H1 (cell line): ENCODE measurements at regions of chr1 and their contacts with region 1.

Region 1: DNA sequence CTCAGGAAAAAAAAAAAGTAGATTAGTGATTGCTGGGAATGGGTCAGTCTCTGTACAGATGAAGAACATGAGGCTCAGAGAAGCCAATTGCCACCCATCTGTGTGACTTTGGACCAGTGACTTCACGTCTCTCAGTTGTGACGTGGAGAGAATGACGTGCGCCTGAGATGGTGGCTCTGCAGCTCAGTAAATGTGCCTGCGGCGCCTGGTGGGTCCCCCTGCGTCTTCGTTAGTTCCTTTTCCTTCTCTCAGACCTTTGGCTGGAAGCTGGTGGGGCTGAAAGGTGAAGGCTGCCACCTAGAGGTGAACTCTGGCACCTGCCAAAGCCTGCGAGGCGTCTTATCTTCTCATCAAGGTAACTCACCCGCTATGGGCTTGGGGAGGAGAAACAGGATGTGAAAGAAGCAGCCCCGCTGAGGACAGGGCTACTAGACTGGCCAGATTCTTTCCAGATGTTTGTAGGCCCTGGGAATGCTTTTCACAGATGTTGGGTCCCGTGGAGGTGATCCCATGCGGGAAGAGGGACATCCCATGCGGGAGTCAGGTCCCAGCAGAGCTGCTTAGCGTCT is 8.7 kb upstream of the E2F2 start:
- DNase-seq: peak; percentile 95 to 98
- H3K4me3 ChIP-seq: no peak overlapping the region
- H3K27ac ChIP-seq: no peak overlapping the region
- H3K4me1 ChIP-seq: peaks cover 0 to under 1% (median 0%) of the 10 kb centered on the region in 4 experiments; a peak in 2 of 7 replicates
- H3K27me3 ChIP-seq: no peaks in the 10 kb centered on the region
- CTCF ChIP-seq: peak; percentile 82 to 97 (median 94)
- EP300 ChIP-seq: peak in 1 of 2 experiments; percentile 53; a peak in 1 of 3 replicates
- POLR2A ChIP-seq: no peak
- RAD21 ChIP-seq: peak; percentile 97 to 98

Region 2: DNA sequence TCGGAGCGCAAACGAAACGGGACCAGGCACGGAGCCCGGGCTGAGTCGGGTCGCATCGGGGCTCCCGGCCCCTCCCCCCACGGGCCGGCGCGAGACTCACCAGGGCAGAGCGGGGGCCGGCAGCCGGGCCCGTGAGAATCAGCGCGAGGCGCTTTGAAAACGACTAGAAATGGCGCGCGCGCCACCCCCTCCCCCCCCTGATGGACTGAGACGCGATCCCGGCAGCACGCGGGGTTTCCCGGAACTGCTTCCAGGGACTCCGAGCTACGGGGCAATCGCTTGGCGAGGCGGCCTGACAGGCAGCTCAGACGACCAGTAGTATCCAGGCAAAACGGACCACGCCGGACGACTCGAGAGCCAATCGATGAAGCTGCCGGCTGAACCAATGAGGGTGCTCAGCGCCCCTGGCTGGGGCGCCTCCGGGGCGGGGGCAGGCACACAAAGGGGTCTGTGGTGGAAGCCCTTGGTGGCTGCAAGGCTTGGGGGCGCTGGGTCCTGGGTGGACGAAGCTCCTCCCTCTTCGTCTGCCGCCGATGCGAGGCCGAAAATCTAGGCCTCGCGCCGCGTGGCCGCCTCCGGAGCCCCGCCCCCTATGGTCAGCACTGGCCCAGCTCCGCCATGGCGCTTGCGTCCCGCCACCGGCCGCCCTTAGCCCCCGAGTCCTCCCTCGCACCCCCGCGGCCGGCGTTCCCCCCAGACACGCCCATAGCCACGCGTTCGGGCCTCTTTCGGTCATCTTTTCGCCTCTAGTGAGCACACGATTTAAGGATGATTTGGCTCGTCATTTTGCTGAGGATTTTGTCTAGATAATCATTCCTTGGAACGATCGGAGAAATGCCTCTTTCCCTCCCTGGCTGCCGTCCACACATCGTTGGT is 195.4 kb before region 1 on chr1 and contains the start of gene HNRNPR:
- CTCF ChIA-PET with region 1: no interaction called
- POLR2A ChIA-PET with region 1: no interaction called
- DNase-seq: peak; percentile 99 to 100
- H3K4me3 ChIP-seq: peak within 1 kb of the TSS; percentile 87 to 91 (median 90)
- H3K27ac ChIP-seq: peak within 1 kb of the TSS; percentile 85
- H3K4me1 ChIP-seq: peaks cover 0 to 8% (median 3%) of the 10 kb centered on the region in 4 experiments; a peak in 1 of 7 replicates
- H3K27me3 ChIP-seq: peaks cover 2 to 29% (median 15%) of the 10 kb centered on the region in 4 experiments
- CTCF ChIP-seq: no peak
- EP300 ChIP-seq: no peak
- POLR2A ChIP-seq: peak in 1 of 2 experiments; percentile 87; a peak in 2 of 3 replicates
- RAD21 ChIP-seq: no peak
- total RNA-seq, gene HNRNPR: 203 and 214 TPM in 2 replicates

Region 3: GRCh38 chr1:23506386-23507115 is 33.2 kb before region 1 on chr1:
- CTCF ChIA-PET with region 1: interaction called, 22 read pairs
- POLR2A ChIA-PET with region 1: no interaction called
- DNase-seq: no peak
- H3K4me3 ChIP-seq: no peak overlapping the region
- H3K27ac ChIP-seq: no peak overlapping the region
- H3K4me1 ChIP-seq: no peaks in the 10 kb centered on the region
- H3K27me3 ChIP-seq: no peaks in the 10 kb centered on the region
- CTCF ChIP-seq: no peak
- EP300 ChIP-seq: no peak
- POLR2A ChIP-seq: no peak
- RAD21 ChIP-seq: no peak

Region 4: GRCh38 chr1:23571465-23571864 is 31.7 kb after region 1 on chr1:
- CTCF ChIA-PET with region 1: interaction called, 16 read pairs
- POLR2A ChIA-PET with region 1: no interaction called
- DNase-seq: no peak
- H3K4me3 ChIP-seq: no peak overlapping the region
- H3K27ac ChIP-seq: no peak overlapping the region
- H3K4me1 ChIP-seq: peaks cover 5 to 15% (median 9%) of the 10 kb centered on the region in 4 experiments
- H3K27me3 ChIP-seq: peaks cover 0 to 5% (median 0%) of the 10 kb centered on the region in 4 experiments; a peak in 3 of 7 replicates
- CTCF ChIP-seq: no peak
- EP300 ChIP-seq: no peak
- POLR2A ChIP-seq: no peak
- RAD21 ChIP-seq: no peak

Region 5: DNA sequence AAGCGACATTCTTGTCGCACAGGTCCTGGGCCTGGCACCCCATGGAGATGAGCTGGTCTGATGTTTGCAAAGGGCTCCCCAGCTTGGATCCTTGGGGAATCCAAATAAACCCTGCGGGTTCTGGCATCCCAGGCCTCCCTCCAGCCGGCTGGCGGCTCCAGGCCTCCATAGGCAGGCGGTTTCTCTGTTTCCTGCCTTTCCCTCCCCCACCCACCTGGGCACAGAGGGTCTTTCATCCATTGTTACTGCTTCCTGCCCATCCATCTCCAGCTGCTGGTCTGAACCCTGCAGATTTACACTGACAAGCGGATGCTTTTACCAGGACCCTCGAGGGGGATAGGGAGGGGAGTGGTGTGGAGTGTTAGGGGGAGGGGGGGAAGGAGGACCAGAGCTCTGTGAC is 58.6 kb after region 1 on chr1:
- CTCF ChIA-PET with region 1: interaction called, 10 read pairs
- POLR2A ChIA-PET with region 1: no interaction called
- DNase-seq: peak; percentile 86
- H3K4me3 ChIP-seq: peak overlapping the region in 1 of 4 experiments; percentile 6; a peak in 3 of 8 replicates
- H3K27ac ChIP-seq: peak overlapping the region; percentile 48; the same call in 1 of the 2 replicates
- H3K4me1 ChIP-seq: peaks cover 16 to 43% (median 18%) of the 10 kb centered on the region in 4 experiments
- H3K27me3 ChIP-seq: no peaks in the 10 kb centered on the region; a peak in 1 of 7 replicates
- CTCF ChIP-seq: peak in 1 of 3 experiments; percentile 13; a peak in 1 of 4 replicates
- EP300 ChIP-seq: peak in 1 of 2 experiments; percentile 92; a peak in 2 of 3 replicates
- POLR2A ChIP-seq: no peak
- RAD21 ChIP-seq: peak in 1 of 2 experiments; percentile 28; a peak in 2 of 4 replicates

Region 6: GRCh38 chr1:23657659-23658275 is 118.0 kb after region 1 on chr1:
- CTCF ChIA-PET with region 1: interaction called, 30 read pairs
- POLR2A ChIA-PET with region 1: interaction called, 3 read pairs
- DNase-seq: peak; percentile 50 to 91
- H3K4me3 ChIP-seq: no peak overlapping the region
- H3K27ac ChIP-seq: no peak overlapping the region
- H3K4me1 ChIP-seq: no peaks in the 10 kb centered on the region
- H3K27me3 ChIP-seq: no peaks in the 10 kb centered on the region
- CTCF ChIP-seq: peak; percentile 81 to 98 (median 90)
- EP300 ChIP-seq: no peak
- POLR2A ChIP-seq: no peak
- RAD21 ChIP-seq: peak; percentile 66 to 76

Region 7: GRCh38 chr1:23682946-23683345 is 143.2 kb after region 1 on chr1:
- CTCF ChIA-PET with region 1: interaction called, 10 read pairs
- POLR2A ChIA-PET with region 1: no interaction called
- DNase-seq: no peak
- H3K4me3 ChIP-seq: no peak overlapping the region
- H3K27ac ChIP-seq: no peak overlapping the region
- H3K4me1 ChIP-seq: no peaks in the 10 kb centered on the region
- H3K27me3 ChIP-seq: no peaks in the 10 kb centered on the region; a peak in 1 of 7 replicates
- CTCF ChIP-seq: no peak
- EP300 ChIP-seq: no peak
- POLR2A ChIP-seq: no peak
- RAD21 ChIP-seq: no peak

Region 8: DNA sequence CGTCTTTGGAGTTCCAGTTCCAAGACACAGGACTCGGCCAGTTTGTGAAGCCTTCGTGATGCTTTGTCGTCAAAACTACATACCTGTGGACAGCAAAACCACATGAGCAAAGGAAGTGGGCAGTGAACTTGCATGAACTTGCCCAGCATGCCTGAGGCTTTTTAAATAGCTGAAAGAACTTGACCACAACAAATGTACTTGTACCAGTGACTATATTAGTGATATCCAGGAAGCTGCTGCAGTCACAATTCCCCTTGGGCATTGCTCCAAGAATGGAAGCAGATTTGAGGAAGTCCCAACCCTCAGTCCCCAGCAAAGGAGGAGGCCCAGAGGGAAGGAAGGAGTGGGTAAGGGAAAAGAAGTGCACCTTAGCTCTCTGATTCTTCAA is 325.8 kb after region 1 on chr1:
- CTCF ChIA-PET with region 1: no interaction called
- POLR2A ChIA-PET with region 1: no interaction called
- DNase-seq: no peak
- H3K4me3 ChIP-seq: no peak overlapping the region
- H3K27ac ChIP-seq: no peak overlapping the region
- H3K4me1 ChIP-seq: no peaks in the 10 kb centered on the region; a peak in 1 of 7 replicates
- H3K27me3 ChIP-seq: peaks cover 6 to 28% (median 19%) of the 10 kb centered on the region in 4 experiments
- CTCF ChIP-seq: no peak
- EP300 ChIP-seq: no peak
- POLR2A ChIP-seq: no peak
- RAD21 ChIP-seq: no peak